AG04450 (cell line): ENCODE measurements at regions of chr7 and their contacts with region 1.

Region 1: DNA sequence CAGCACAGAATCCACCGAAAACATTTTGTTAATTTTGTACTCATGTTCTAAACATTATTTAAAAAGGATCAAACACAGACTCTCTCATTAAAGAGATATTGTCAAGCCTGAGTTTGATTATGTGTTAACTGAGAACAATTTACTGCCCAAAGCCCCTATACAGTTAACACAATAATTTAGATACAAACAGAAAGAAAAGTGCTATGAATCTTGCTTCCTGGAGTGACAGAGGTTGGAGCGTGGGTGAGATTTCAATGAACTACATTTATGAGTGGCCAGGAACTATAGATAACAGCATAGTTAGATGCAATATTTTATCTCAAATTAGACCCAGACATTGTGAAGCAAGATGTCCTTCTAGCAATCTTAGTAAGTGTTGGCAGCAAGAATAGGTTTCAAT is 448.9 kb upstream of the ETV1 start:
- DNase-seq: no peak
- H3K4me3 ChIP-seq: no peak overlapping the region
- H3K27ac ChIP-seq: no peak overlapping the region
- H3K27me3 ChIP-seq: no peaks in the 10 kb centered on the region
- CTCF ChIP-seq: no peak

Region 2: GRCh38 chr7:14177876-14178275 is 260.5 kb before region 1 on chr7:
- CTCF ChIA-PET with region 1: interaction called, 11 read pairs
- POLR2A ChIA-PET with region 1: no interaction called
- DNase-seq: no peak
- H3K4me3 ChIP-seq: no peak overlapping the region
- H3K27ac ChIP-seq: no peak overlapping the region
- H3K27me3 ChIP-seq: no peaks in the 10 kb centered on the region
- CTCF ChIP-seq: no peak